GM13976 (cell line): ENCODE measurements at regions of chr15 and their contacts with region 1.

Region 1: DNA sequence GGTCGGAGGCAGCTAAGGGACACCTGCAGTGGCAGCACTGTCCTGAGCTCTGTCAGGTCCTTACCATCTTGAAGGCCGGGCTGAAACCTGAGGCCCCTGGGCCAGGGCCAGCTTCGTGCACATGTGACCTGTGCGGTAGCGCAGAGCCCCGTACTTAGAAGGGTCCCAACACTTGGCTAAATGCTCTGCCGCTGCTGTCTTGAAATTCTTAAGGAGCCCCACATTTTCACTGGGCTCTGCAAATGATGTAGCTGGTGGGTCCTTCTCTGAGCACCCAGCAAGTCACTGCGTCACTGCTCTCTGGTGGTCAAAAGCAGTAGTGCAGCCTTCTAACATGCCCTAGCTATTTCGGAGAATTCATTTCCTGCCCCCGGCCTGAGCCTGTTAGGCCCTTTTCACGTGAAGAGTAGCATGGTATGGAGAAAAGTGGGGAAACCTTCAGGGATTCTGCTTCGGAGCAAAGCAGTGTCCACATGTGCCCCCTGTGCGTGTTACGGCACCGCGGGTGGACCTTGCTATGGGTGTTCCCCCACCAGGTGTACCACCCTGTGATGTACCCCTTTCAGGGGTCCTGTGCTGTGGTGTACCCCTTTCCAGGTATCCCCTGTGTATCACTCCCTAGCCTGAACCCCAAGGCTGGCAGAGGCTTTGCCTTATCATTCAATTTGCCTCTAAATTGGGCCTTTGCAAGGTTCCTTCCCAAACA is 79.7 kb downstream of the TMEM266 start:
- DNase-seq: peak; percentile 87
- CTCF ChIP-seq: peak; percentile 78

Region 2: GRCh38 chr15:75809986-75810750 is 329.4 kb before region 1 on chr15:
- in situ Hi-C with region 1: loop called (anchors 10 kb)
- DNase-seq: peak; percentile 34
- CTCF ChIP-seq: peak; percentile 47

Region 3: GRCh38 chr15:76057332-76058000 is 82.1 kb before region 1 on chr15:
- in situ Hi-C with region 1: loop called (anchors 10 kb)
- DNase-seq: peak; percentile 56
- CTCF ChIP-seq: peak; percentile 53